ENCODE measurements at regions of chr1 and their contacts with region 1.

Region 1: DNA sequence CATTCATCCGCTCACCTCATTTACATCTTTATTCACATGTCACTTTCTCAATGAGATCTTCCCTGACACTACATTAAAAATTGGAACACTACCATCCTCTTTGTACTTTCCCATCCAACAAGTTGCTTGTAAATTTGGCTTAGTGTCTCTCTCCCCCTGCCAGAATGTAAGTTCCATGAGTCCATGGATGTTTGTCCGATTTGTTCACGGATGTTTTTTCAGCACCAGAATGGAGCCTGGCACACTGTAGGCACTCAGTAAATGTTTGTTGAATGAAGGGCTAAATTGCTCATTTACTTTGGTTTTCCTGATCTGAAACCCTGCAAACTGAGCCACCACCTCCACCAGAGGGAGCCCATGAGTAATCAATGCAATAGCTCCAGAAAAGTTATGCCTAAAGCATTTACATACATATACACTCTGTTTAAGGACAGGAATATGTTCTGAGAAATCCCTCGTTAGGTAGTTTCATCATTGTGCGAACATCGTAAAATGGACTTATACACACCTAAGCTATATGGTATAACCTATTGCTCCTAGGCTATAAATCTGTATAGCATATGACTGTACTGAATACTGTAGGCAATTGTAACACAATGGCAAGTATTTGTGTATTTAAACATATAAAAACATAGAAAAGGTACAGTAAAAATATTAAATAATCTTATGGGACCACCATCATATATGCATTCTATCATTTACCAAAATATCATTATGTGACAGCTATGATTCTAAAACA is 2.8 kb upstream of the EYA3 start:
- DNase-seq: peak; percentile 75 to 81 (median 80)
- H3K4me3 ChIP-seq: no peak overlapping the region
- H3K4me3 Mint-ChIP-seq: no peak overlapping the region
- H3K27ac ChIP-seq: peak overlapping the region in 1 of 2 donors; percentile 3
- H3K27ac Mint-ChIP-seq: peak overlapping the region; percentile 66 to 90 (median 75)
- H3K4me1 ChIP-seq: peaks cover 22 to 25% of the 10 kb centered on the region in 2 donors
- H3K4me1 Mint-ChIP-seq: peaks cover 24% of the 10 kb centered on the region
- H3K27me3 ChIP-seq: no peaks in the 10 kb centered on the region
- H3K27me3 Mint-ChIP-seq: peaks cover 0 to 2% (median 0%) of the 10 kb centered on the region in 3 donors
- CTCF ChIP-seq: peak; percentile 89

Region 2: GRCh38 chr1:28104866-28105467 is 13.8 kb after region 1 on chr1:
- intact Hi-C with region 1: loop called in 1 of 2 experiments (anchors 2 kb)
- DNase-seq: peak in 1 of 3 donors; percentile 27
- H3K4me3 ChIP-seq: no peak overlapping the region
- H3K4me3 Mint-ChIP-seq: no peak overlapping the region
- H3K27ac ChIP-seq: no peak overlapping the region
- H3K27ac Mint-ChIP-seq: peak overlapping the region in 1 of 7 donors; percentile 73
- H3K4me1 ChIP-seq: peaks cover 20 to 23% of the 10 kb centered on the region in 2 donors
- H3K4me1 Mint-ChIP-seq: peaks cover 23% of the 10 kb centered on the region
- H3K27me3 ChIP-seq: no peaks in the 10 kb centered on the region
- H3K27me3 Mint-ChIP-seq: peaks cover 0 to 3% (median 2%) of the 10 kb centered on the region in 3 donors
- CTCF ChIP-seq: no peak

Region 3: DNA sequence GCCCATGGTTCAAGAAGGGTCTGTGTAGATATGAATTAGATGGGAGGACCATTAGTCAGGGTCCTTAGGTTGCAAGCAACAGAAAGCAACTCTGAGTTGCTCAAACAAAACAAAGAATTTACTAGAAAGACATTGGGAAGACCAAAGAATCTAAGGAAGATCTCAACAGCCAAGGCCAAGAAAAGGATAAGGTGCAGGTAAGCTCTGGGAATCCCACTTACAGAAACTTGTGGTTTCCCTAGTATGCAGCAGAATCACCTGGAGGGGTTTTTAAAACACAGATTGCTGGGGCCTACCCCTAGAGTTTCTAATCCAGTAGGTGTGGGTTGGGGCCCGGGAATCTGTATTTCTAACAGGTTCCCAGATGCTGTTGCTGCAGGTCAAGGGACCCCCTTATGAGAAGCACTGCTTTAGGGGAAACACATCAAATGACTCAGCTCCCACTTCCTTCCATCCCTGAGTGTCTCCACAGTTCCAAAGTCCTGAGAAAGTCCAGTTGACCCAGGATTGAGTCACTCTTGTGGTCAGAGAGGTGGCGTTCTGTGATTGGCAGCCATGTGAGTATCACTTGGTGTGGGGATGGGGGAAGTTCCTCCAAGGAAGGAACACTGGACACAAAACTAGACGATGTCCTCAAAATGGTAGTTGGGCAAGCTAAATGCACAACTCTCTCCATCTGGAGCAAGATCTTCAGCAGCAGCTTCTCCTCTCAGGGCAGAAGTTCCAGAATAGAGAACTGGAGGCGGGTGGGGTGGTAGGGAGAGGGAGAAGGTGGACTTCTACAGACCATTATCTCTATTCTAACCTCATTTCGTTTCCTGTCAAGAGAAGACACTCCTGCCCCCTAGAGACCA is 21.4 kb after region 1 on chr1:
- intact Hi-C with region 1: loop called (anchors 2 kb)
- DNase-seq: peak; percentile 98 to 100 (median 99)
- H3K4me3 ChIP-seq: peak overlapping the region in 1 of 3 experiments; percentile 1
- H3K4me3 Mint-ChIP-seq: peak overlapping the region; percentile 12 to 33
- H3K27ac ChIP-seq: peak overlapping the region; percentile 87 to 100
- H3K27ac Mint-ChIP-seq: peak overlapping the region; percentile 98 to 100 (median 100)
- H3K4me1 ChIP-seq: peaks cover 77 to 86% of the 10 kb centered on the region in 2 donors
- H3K4me1 Mint-ChIP-seq: peaks cover 74% of the 10 kb centered on the region
- H3K27me3 ChIP-seq: no peaks in the 10 kb centered on the region
- H3K27me3 Mint-ChIP-seq: peaks cover 0 to 4% (median 4%) of the 10 kb centered on the region in 3 donors
- CTCF ChIP-seq: no peak

Region 4: DNA sequence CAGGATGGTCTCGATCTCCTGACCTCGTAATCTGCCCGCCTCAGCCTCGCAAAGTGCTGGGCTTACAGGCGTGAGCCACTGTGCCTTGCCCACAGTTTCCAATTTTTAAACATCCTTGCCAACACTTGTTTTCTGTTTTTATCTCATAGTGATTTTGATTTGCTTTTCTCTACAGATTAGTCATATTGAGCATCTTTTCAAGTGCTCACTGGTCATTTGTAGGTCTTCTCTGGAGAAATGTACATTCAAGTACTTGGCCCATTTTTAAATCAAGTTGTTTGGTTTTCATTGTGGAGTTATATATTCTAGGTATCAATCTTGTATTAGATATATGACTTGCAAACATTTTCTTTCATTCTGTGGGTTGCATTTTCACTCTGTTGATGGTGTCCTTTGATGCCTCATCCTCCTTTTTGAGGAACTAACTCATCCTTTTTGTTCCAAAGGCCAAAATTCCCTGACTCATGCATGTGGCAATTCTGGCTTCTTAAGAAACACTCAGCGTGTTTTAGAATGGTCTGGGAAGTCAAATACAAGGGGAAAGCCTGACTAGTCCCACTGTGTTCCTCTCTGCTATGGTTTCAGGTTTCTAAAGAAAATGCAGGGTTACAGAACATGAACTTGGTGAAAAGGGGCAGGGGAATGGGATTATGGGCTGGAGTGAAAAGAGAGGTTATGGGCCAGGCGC is 48.0 kb after region 1 on chr1:
- intact Hi-C with region 1: loop called (anchors 5 kb)
- DNase-seq: peak; percentile 94 to 98 (median 98)
- H3K4me3 ChIP-seq: no peak overlapping the region
- H3K4me3 Mint-ChIP-seq: peak overlapping the region in 1 of 2 donors; percentile 44
- H3K27ac ChIP-seq: peak overlapping the region; percentile 72 to 84
- H3K27ac Mint-ChIP-seq: peak overlapping the region; percentile 96 to 100 (median 99)
- H3K4me1 ChIP-seq: peaks cover 74 to 86% of the 10 kb centered on the region in 2 donors
- H3K4me1 Mint-ChIP-seq: peaks cover 78% of the 10 kb centered on the region
- H3K27me3 ChIP-seq: no peaks in the 10 kb centered on the region
- H3K27me3 Mint-ChIP-seq: peaks cover 0 to 3% (median 1%) of the 10 kb centered on the region in 3 donors
- CTCF ChIP-seq: no peak

Region 5: DNA sequence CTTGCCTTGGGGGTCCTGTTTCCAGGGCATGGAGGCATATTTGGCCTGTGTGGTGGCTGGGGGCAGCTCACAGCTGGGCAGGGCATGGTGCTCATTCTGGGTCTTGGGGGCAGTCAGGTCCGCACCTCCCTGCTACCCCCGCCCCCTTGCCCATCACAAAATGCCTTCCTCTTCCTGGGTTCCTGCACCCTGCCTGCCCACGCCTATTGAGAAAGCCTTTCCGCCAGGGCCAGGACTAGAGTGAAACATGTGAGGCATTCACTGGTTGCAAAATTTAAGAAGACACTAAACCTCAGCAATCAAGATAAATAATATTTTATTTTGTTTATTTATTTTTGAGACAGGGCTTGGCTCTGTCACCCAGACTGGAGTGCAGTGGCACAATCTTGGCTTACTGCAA is 65.6 kb after region 1 on chr1:
- intact Hi-C with region 1: loop called (anchors 5 kb)
- DNase-seq: peak; percentile 71 to 78 (median 77)
- H3K4me3 ChIP-seq: peak overlapping the region in 1 of 3 experiments; percentile 46
- H3K4me3 Mint-ChIP-seq: peak overlapping the region; percentile 56 to 63
- H3K27ac ChIP-seq: peak overlapping the region; percentile 75 to 76
- H3K27ac Mint-ChIP-seq: peak overlapping the region; percentile 81 to 97 (median 87)
- H3K4me1 ChIP-seq: peaks cover 92 to 98% of the 10 kb centered on the region in 2 donors
- H3K4me1 Mint-ChIP-seq: peaks cover 87% of the 10 kb centered on the region
- H3K27me3 ChIP-seq: no peaks in the 10 kb centered on the region
- H3K27me3 Mint-ChIP-seq: no peaks in the 10 kb centered on the region
- CTCF ChIP-seq: no peak

Region 6: DNA sequence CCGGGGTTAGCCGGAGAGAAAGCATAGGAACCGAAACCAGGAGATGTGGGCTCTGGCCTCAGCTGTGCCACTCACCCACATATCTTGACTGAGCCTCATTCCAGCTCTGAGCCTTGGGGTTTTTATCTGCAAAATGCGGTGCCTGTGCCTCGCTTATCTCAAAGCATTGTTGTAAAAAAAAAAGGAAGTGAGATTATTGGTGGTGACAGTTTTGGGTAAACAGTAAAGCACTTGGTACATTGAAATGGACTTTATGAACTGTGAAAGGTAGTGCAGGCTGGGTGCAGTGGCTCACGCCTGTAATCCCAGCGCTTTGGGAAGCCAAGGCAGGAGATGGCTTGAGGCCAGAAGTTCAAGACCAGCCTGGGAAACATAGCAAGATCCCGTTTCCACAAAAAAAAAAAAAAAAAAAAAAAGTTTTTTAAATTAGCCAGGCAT is 81.5 kb after region 1 on chr1:
- intact Hi-C with region 1: loop called in 1 of 2 experiments (anchors 5 kb)
- DNase-seq: peak; percentile 57 to 77 (median 67)
- H3K4me3 ChIP-seq: peak overlapping the region; percentile 4 to 97 (median 7)
- H3K4me3 Mint-ChIP-seq: peak overlapping the region; percentile 96 to 98
- H3K27ac ChIP-seq: peak overlapping the region; percentile 83 to 95
- H3K27ac Mint-ChIP-seq: peak overlapping the region; percentile 97 to 99 (median 98)
- H3K4me1 ChIP-seq: peaks cover 76 to 90% of the 10 kb centered on the region in 2 donors
- H3K4me1 Mint-ChIP-seq: peaks cover 85% of the 10 kb centered on the region
- H3K27me3 ChIP-seq: no peaks in the 10 kb centered on the region
- H3K27me3 Mint-ChIP-seq: peaks cover 0 to 8% (median 4%) of the 10 kb centered on the region in 3 donors
- CTCF ChIP-seq: no peak

Region 7: GRCh38 chr1:28208818-28209441 is 117.7 kb after region 1 on chr1:
- intact Hi-C with region 1: loop called (anchors 2 to 5 kb)
- DNase-seq: peak; percentile 59 to 74 (median 70)
- H3K4me3 ChIP-seq: no peak overlapping the region
- H3K4me3 Mint-ChIP-seq: no peak overlapping the region
- H3K27ac ChIP-seq: no peak overlapping the region
- H3K27ac Mint-ChIP-seq: peak overlapping the region in 3 of 7 donors; percentile 38 to 78 (median 40)
- H3K4me1 ChIP-seq: no peaks in the 10 kb centered on the region
- H3K4me1 Mint-ChIP-seq: no peaks in the 10 kb centered on the region
- H3K27me3 ChIP-seq: no peaks in the 10 kb centered on the region
- H3K27me3 Mint-ChIP-seq: peaks cover 0 to 1% (median 0%) of the 10 kb centered on the region in 3 donors
- CTCF ChIP-seq: peak; percentile 83